ENCODE measurements at regions of chr2 and their contacts with region 1.

Region 1: GRCh38 chr2:142065700-142066099 is 65.1 kb downstream of the LRP1B start:
- DNase-seq: peak; percentile 49
- H3K4me3 ChIP-seq: no peak overlapping the region
- H3K27ac ChIP-seq: no peak overlapping the region
- H3K4me1 ChIP-seq: peaks cover 24% of the 10 kb centered on the region
- H3K27me3 ChIP-seq: no peaks in the 10 kb centered on the region
- CTCF ChIP-seq: no peak

Region 2: GRCh38 chr2:141630407-141630930 is 435.2 kb before region 1 on chr2:
- CTCF ChIA-PET with region 1: no interaction called
- POLR2A ChIA-PET with region 1: no interaction called
- intact Hi-C with region 1: no loop called
- DNase-seq: no peak
- H3K4me3 ChIP-seq: no peak overlapping the region
- H3K27ac ChIP-seq: no peak overlapping the region
- H3K4me1 ChIP-seq: no peaks in the 10 kb centered on the region
- H3K27me3 ChIP-seq: no peaks in the 10 kb centered on the region
- CTCF ChIP-seq: no peak

Region 3: GRCh38 chr2:141791521-141791920 is 274.2 kb before region 1 on chr2:
- CTCF ChIA-PET with region 1: no interaction called
- POLR2A ChIA-PET with region 1: no interaction called
- intact Hi-C with region 1: no loop called
- DNase-seq: no peak
- H3K4me3 ChIP-seq: no peak overlapping the region
- H3K27ac ChIP-seq: no peak overlapping the region
- H3K4me1 ChIP-seq: no peaks in the 10 kb centered on the region
- H3K27me3 ChIP-seq: no peaks in the 10 kb centered on the region
- CTCF ChIP-seq: no peak

Region 4: DNA sequence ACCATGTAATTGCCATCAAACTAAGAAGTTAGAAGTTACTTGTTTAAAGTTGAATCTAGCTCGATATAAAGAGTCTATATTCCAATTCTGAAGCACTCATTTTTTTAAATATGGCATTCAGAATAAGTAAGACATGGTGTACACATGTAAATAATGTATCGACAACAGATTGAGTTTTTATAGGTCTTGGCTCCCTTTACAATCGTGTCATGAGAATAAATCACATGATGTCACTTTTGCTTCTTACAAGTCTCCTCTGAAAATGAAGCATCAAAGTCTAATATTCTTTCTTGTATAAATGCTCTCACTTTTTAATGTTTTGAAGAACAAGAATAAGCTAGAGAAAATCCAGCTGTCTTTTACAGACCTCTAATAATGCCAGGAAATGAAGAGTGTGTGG is 32.0 kb after region 1 on chr2:
- CTCF ChIA-PET with region 1: no interaction called
- POLR2A ChIA-PET with region 1: no interaction called
- intact Hi-C with region 1: loop called (anchors 2 kb)
- DNase-seq: no peak
- H3K4me3 ChIP-seq: no peak overlapping the region
- H3K27ac ChIP-seq: no peak overlapping the region
- H3K4me1 ChIP-seq: peaks cover 8% of the 10 kb centered on the region
- H3K27me3 ChIP-seq: peaks cover 6% of the 10 kb centered on the region
- CTCF ChIP-seq: no peak

Region 5: DNA sequence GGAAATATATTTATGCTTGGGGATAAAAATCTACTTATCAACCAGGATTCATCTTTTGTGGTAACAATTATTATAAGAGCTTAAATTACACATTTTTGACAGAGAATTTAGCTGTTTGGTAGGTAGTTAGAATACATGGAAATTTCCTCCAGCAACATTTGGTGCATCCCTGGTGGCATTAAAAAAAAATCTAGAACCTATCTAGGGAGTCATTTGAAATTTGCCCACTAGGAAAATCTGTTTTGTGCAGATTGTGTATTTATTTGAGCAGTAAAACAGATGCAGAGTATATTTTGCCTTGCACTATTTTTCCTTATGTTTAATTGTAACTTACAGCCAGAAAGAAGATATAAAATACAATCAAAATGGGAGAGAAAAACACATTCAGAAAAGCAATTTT is 273.6 kb after region 1 on chr2:
- CTCF ChIA-PET with region 1: no interaction called
- POLR2A ChIA-PET with region 1: no interaction called
- intact Hi-C with region 1: no loop called
- DNase-seq: no peak
- H3K4me3 ChIP-seq: no peak overlapping the region
- H3K27ac ChIP-seq: no peak overlapping the region
- H3K4me1 ChIP-seq: no peaks in the 10 kb centered on the region
- H3K27me3 ChIP-seq: no peaks in the 10 kb centered on the region
- CTCF ChIP-seq: no peak